HAP-1 (cell line): ENCODE measurements at regions of chr16 and their contacts with region 1.

Region 1: GRCh38 chr16:87778830-87779579 is 13.2 kb upstream of the KLHDC4 start:
- DNase-seq: peak; percentile 86 to 96
- H3K4me3 ChIP-seq: peak overlapping the region; percentile 10
- H3K4me1 ChIP-seq: peaks cover 13% of the 10 kb centered on the region
- H3K27me3 ChIP-seq: no peaks in the 10 kb centered on the region

Region 2: DNA sequence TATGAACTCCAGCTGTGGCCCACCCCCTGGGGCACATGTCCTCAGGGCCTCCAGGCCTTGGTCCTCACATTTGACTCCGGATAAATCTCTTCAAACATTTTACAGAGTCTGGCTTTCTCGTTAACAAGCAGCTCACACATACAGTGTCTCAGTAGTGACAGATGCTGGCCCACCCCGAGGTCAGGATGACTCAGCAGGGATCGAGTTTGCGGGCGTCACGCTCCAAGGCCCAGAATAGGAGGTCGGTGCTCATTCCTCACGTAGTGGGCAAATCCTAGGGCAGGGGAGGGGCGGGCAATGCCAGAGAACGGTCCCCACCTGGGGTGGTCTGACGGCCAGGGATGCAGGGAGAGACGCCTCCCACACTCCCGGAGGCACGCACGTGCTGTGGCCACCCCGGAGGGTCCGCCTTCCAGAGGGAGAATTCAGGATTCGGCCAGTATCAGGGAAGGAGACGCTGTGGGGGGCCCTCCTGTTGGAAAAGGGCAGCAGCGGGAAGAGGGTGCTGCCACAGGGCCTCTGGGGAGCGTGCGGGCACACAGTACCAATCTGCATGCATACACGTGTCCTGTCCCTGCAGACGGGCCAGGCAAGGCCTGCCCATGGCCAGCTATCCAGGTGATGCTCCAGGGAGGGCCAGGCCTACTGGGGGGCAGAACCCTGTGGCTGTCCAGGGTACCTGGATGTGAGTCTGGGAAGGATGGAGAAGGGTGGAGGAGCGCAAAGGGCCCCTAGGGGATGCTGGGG is 81.7 kb after region 1 on chr16:
- in situ Hi-C with region 1: loop called (anchors 5 kb)
- DNase-seq: no peak
- H3K4me3 ChIP-seq: no peak overlapping the region
- H3K4me1 ChIP-seq: peaks cover 8% of the 10 kb centered on the region
- H3K27me3 ChIP-seq: no peaks in the 10 kb centered on the region